ENCODE measurements at regions of chr11 and their contacts with region 1.

Region 1: GRCh38 chr11:11230802-11231562 is 122.1 kb downstream of the CSNK2A3 start:
- DNase-seq: peak in 1 of 2 experiments; percentile 79
- H3K4me3 ChIP-seq: no peak overlapping the region
- H3K27ac ChIP-seq: no peak overlapping the region
- H3K4me1 ChIP-seq: no peaks in the 10 kb centered on the region
- H3K27me3 ChIP-seq: peaks cover 0 to 4% (median 0%) of the 10 kb centered on the region in 4 experiments; a peak in 2 of 7 replicates
- CTCF ChIP-seq: peak; percentile 86 to 87 (median 86)
- EP300 ChIP-seq: no peak
- POLR2A ChIP-seq: no peak
- RAD21 ChIP-seq: peak; percentile 76 to 86

Region 2: GRCh38 chr11:11217929-11218628 is 12.9 kb before region 1 on chr11:
- CTCF ChIA-PET with region 1: interaction called, 82 read pairs
- POLR2A ChIA-PET with region 1: no interaction called
- DNase-seq: no peak
- H3K4me3 ChIP-seq: no peak overlapping the region
- H3K27ac ChIP-seq: no peak overlapping the region; the same call in 1 of the 2 replicates
- H3K4me1 ChIP-seq: no peaks in the 10 kb centered on the region
- H3K27me3 ChIP-seq: no peaks in the 10 kb centered on the region; a peak in 1 of 7 replicates
- CTCF ChIP-seq: no peak
- EP300 ChIP-seq: no peak
- POLR2A ChIP-seq: no peak
- RAD21 ChIP-seq: no peak

Region 3: DNA sequence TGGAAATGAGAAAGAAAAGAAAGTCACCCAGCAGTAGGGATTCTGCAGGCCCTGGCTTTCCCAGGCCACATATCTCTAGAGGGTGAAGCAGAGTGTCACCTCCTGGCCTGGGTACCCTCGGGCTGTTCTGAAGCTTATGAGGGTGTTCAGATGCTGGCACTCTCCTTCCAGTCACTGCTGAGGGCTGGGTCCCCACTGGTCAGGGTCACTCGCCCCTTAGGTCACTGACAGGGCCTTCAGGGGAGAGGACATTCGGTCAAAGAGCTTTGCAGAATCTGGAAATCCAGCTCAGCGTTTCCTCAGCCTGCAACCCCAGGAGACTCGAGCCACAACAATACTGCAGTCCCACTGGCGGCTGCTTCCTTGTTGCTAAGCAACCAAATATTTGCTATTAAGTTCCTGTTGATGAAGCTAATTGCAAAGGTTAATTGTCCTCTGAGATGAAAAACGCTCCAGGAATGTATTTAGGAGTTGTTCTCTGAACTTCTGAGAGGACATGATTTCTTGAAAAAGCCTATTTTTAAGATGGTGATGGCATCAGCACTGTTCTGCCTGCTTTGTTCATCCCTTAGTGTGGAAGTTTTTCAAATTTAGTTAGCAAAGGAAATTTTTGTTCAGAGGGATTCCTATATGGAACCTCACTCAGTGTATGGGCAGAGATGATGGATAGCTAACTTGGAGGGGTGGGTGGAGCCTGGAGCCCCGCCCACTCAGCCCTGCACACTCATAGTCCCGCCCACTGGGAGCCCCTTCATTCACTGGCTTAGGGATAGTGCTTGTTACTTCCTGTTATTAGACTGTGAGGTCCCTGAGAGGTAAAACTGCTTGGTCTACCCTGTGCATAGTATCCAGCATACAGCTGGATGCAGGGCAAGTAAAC is 12.8 kb after region 1 on chr11:
- CTCF ChIA-PET with region 1: interaction called, 28 read pairs
- POLR2A ChIA-PET with region 1: interaction called, 3 read pairs
- DNase-seq: peak in 1 of 2 experiments; percentile 67
- H3K4me3 ChIP-seq: no peak overlapping the region
- H3K27ac ChIP-seq: peak overlapping the region; percentile 9; the same call in 1 of the 2 replicates
- H3K4me1 ChIP-seq: peaks cover 2 to 5% (median 3%) of the 10 kb centered on the region in 4 experiments; a peak in 5 of 7 replicates
- H3K27me3 ChIP-seq: no peaks in the 10 kb centered on the region; a peak in 1 of 7 replicates
- CTCF ChIP-seq: no peak
- EP300 ChIP-seq: 0 out of 3 replicates have a peak, but pooled peaks of 1 of the 2 experiments have one; percentile 31
- POLR2A ChIP-seq: no peak
- RAD21 ChIP-seq: no peak

Region 4: DNA sequence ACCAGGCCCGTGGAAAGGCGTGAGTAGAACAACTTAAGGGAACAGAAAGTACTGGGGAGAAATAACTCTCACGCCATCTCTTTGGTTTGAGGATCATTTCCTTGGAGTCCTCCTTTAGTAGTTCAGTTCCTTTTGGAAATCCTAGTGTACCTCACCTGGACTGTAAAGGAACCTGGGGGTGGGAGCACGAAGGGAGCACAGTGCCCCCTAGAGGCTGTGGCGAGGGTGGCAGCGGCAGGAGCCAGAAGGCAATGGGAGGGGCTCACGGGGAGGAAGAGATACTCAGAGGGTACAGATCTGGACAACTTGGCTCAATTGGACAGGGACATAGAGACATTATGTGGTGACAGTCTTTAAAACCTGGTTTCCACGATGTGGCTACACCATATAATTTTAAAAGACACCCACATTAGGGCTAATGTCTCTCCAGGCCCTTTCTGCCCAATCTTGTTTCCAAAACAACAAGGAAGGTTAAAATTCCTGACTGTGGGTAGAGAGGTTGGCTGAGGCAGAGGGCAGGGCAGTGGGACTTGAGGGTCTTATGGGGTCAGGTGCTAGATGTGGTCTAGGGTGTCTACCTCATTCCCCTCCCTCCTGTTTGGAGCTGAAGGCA is 35.1 kb after region 1 on chr11:
- CTCF ChIA-PET with region 1: interaction called, 14 read pairs
- POLR2A ChIA-PET with region 1: no interaction called
- DNase-seq: peak in 1 of 2 experiments; percentile 94
- H3K4me3 ChIP-seq: no peak overlapping the region
- H3K27ac ChIP-seq: no peak overlapping the region
- H3K4me1 ChIP-seq: peaks cover 0 to 7% (median under 1%) of the 10 kb centered on the region in 4 experiments; a peak in 3 of 7 replicates
- H3K27me3 ChIP-seq: no peaks in the 10 kb centered on the region
- CTCF ChIP-seq: peak; percentile 90 to 98 (median 95)
- EP300 ChIP-seq: no peak
- POLR2A ChIP-seq: no peak
- RAD21 ChIP-seq: peak; percentile 86 to 92

Region 5: DNA sequence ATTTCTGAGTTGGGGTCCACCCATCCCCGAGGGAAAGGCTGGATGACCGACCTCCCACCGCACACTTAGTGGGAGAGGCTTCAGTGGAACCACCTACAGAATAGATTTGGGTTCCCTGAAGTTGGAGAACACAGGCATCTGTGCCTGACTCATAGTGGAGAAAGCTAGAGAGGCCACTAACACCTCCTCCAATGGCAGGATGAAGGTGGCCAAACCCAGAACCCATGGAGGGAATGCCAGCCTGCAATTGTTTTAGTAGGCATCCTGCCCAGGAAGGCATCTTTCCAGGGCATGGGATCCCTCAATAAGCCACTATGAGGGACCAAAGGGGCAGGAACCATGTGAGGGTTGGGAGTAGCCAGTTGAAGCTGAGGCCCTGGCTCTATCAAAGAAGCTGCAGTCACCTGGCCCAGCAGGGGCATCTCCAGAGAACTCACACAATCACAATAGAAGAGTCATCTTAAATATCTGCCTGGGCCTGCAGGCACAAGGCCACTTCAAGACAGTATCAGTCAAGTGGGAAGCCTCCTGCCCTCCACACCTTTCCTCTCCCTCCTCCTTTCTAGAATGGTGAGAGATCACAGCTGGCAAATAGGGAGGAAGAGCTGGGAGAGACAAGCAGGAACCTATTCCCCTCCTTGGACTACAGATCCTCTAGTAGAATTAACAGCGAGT is 246.1 kb after region 1 on chr11:
- CTCF ChIA-PET with region 1: no interaction called
- POLR2A ChIA-PET with region 1: no interaction called
- DNase-seq: no peak
- H3K4me3 ChIP-seq: no peak overlapping the region
- H3K27ac ChIP-seq: no peak overlapping the region
- H3K4me1 ChIP-seq: peaks cover 0 to 6% (median 3%) of the 10 kb centered on the region in 4 experiments; a peak in 3 of 7 replicates
- H3K27me3 ChIP-seq: no peaks in the 10 kb centered on the region
- CTCF ChIP-seq: no peak
- EP300 ChIP-seq: no peak
- POLR2A ChIP-seq: no peak
- RAD21 ChIP-seq: no peak